ENCODE measurements at regions of chr16 and their contacts with region 1.

Region 1: GRCh38 chr16:57757326-57757786 is 21.8 kb downstream of the KATNB1 start:
- DNase-seq: peak; percentile 78 to 91 (median 86)
- H3K4me3 ChIP-seq: no peak overlapping the region
- H3K4me3 Mint-ChIP-seq: no peak overlapping the region
- H3K27ac ChIP-seq: no peak overlapping the region
- H3K27ac Mint-ChIP-seq: peak overlapping the region in 1 of 8 donors; percentile 50
- H3K4me1 ChIP-seq: no peaks in the 10 kb centered on the region
- H3K4me1 Mint-ChIP-seq: peaks cover 0 to 7% (median 0%) of the 10 kb centered on the region in 3 donors
- H3K27me3 ChIP-seq: no peaks in the 10 kb centered on the region
- H3K27me3 Mint-ChIP-seq: no peaks in the 10 kb centered on the region

Region 2: GRCh38 chr16:57723170-57723569 is 34.2 kb before region 1 on chr16:
- CTCF ChIA-PET with region 1: no interaction called
- POLR2A ChIA-PET with region 1: no interaction called
- DNase-seq: no peak
- H3K4me3 ChIP-seq: no peak overlapping the region
- H3K4me3 Mint-ChIP-seq: no peak overlapping the region
- H3K27ac ChIP-seq: no peak overlapping the region
- H3K27ac Mint-ChIP-seq: no peak overlapping the region
- H3K4me1 ChIP-seq: no peaks in the 10 kb centered on the region
- H3K4me1 Mint-ChIP-seq: no peaks in the 10 kb centered on the region
- H3K27me3 ChIP-seq: no peaks in the 10 kb centered on the region
- H3K27me3 Mint-ChIP-seq: peaks cover 3 to 4% of the 10 kb centered on the region in 2 donors

Region 3: DNA sequence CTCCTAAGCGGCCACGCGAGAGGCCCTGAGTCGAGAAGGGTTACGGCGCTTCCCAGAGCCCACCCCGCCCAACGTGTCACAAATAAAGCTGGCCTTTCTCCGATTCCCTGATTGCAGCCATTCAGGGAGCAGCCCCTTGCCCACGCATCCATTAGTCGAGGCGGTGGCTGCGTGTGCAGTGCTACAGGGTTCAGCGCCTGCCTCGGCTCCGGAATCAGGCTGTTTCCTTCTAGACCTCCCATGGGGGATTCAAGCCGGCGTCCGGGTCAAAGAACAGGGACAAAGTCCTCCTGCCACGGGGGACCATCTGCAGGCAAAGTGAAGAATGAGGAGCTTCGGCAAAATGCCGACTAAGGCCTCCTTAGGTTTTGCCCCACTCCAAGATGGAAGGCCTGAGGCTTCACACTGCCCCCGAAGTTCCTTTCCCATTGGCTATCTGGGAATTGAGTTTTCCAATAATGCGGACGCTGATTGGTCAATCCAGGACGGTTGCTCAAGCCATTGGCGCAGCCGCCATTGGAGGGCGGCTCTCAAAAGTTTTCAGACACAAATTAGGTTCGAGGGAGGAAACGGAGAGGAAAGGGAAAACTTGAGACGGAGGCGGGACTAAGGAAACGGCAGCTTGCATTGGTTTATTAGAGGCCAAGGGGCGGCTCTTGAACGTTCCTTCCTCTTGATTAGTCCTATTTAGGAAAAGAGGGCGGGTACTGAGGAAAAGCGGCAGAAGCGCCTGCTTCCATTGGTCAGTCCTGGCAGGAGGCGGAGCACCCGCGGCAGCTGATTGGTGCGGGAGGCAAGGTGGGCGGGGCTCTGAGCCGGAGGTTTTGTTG is 22.2 kb before region 1 on chr16:
- CTCF ChIA-PET with region 1: interaction called, 11 read pairs
- POLR2A ChIA-PET with region 1: no interaction called
- DNase-seq: peak; percentile 96 to 99 (median 99)
- H3K4me3 ChIP-seq: peak overlapping the region; percentile 90
- H3K4me3 Mint-ChIP-seq: peak overlapping the region; percentile 91 to 100 (median 96)
- H3K27ac ChIP-seq: peak overlapping the region; percentile 87
- H3K27ac Mint-ChIP-seq: peak overlapping the region; percentile 79 to 100 (median 96)
- H3K4me1 ChIP-seq: peaks cover 25% of the 10 kb centered on the region
- H3K4me1 Mint-ChIP-seq: peaks cover 30 to 44% (median 38%) of the 10 kb centered on the region in 3 donors
- H3K27me3 ChIP-seq: no peaks in the 10 kb centered on the region
- H3K27me3 Mint-ChIP-seq: peaks cover 0 to 5% of the 10 kb centered on the region in 2 donors

Region 4: GRCh38 chr16:57863434-57864160 is 106.2 kb after region 1 on chr16:
- CTCF ChIA-PET with region 1: interaction called, 13 read pairs
- POLR2A ChIA-PET with region 1: no interaction called
- DNase-seq: no peak
- H3K4me3 ChIP-seq: no peak overlapping the region
- H3K4me3 Mint-ChIP-seq: no peak overlapping the region
- H3K27ac ChIP-seq: no peak overlapping the region
- H3K27ac Mint-ChIP-seq: no peak overlapping the region
- H3K4me1 ChIP-seq: no peaks in the 10 kb centered on the region
- H3K4me1 Mint-ChIP-seq: no peaks in the 10 kb centered on the region
- H3K27me3 ChIP-seq: no peaks in the 10 kb centered on the region
- H3K27me3 Mint-ChIP-seq: peaks cover 17 to 41% of the 10 kb centered on the region in 2 donors

Region 5: DNA sequence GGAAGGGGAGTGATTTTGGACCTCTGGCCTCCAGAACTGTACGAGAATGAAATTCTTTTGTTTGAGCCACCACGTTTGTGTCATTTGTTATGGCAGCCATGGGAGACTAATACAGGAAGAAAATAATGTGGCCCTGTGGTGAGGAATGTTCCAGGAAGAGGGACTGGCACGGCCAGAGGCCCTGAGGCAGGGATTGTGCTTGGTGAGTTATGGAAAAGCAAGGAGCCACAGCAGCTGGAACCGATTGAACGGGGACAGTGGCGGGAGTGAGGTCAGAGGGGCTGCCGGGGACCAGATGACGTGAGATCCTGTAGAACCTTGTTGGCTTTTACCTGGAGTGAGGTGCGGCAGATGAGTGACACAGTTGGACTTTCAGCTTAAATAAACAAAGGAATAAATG is 320.5 kb after region 1 on chr16:
- CTCF ChIA-PET with region 1: no interaction called
- POLR2A ChIA-PET with region 1: no interaction called
- DNase-seq: no peak
- H3K4me3 ChIP-seq: no peak overlapping the region
- H3K4me3 Mint-ChIP-seq: no peak overlapping the region
- H3K27ac ChIP-seq: no peak overlapping the region
- H3K27ac Mint-ChIP-seq: no peak overlapping the region
- H3K4me1 ChIP-seq: no peaks in the 10 kb centered on the region
- H3K4me1 Mint-ChIP-seq: no peaks in the 10 kb centered on the region
- H3K27me3 ChIP-seq: no peaks in the 10 kb centered on the region
- H3K27me3 Mint-ChIP-seq: peaks cover 0 to 9% of the 10 kb centered on the region in 2 donors

Measured in CD8-positive, alpha-beta memory T cell (primary cell).